ENCODE measurements at regions of chr14 and their contacts with region 1.

Region 1: DNA sequence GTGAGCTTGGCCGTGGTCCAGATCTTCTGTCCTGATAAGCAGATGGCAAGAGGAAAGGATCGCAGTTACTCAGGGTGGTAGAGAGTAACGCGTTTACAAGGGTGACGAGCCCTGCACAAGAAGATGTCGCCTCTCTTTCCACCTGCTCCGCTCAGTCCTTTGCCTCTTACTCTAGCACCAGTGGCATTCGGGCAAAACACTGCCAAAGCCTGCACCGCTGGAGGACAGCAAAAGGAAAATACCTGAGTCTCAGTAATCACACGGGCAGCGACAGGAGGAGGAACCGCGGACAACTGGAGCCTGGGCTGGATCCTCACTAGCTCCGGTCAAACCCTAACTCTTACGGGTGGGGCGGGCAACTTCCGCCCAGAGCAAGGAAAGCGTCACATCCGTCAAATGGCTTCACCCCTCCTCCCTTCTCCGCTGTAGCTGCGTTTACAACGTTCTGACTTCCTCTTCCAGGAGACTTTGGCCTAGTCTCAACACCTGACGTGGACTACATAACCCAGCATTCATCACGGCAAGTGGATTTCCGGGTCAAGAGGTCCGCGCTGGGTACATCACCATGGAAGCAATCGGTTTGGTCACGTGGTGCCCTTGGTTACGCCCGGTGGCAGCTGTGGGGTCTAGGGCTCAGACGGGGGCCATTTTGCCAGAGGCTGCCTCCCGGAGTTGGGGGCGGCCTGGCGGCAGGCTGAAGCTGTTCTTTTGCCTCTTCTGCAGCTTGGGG is at the starts of genes KLHL28 and TOGARAM1:
- DNase-seq: peak; percentile 99
- H3K4me3 ChIP-seq: peak within 1 kb of the TSS; percentile 63
- H3K27ac ChIP-seq: peak within 1 kb of the TSS; percentile 95
- H3K4me1 ChIP-seq: peaks cover 27% of the 10 kb centered on the region
- H3K27me3 ChIP-seq: no peaks in the 10 kb centered on the region
- CTCF ChIP-seq: no peak
- total RNA-seq, gene KLHL28: 10.5 to 18.6 TPM
- total RNA-seq, gene TOGARAM1: 8.8 to 10.7 TPM

Region 2: DNA sequence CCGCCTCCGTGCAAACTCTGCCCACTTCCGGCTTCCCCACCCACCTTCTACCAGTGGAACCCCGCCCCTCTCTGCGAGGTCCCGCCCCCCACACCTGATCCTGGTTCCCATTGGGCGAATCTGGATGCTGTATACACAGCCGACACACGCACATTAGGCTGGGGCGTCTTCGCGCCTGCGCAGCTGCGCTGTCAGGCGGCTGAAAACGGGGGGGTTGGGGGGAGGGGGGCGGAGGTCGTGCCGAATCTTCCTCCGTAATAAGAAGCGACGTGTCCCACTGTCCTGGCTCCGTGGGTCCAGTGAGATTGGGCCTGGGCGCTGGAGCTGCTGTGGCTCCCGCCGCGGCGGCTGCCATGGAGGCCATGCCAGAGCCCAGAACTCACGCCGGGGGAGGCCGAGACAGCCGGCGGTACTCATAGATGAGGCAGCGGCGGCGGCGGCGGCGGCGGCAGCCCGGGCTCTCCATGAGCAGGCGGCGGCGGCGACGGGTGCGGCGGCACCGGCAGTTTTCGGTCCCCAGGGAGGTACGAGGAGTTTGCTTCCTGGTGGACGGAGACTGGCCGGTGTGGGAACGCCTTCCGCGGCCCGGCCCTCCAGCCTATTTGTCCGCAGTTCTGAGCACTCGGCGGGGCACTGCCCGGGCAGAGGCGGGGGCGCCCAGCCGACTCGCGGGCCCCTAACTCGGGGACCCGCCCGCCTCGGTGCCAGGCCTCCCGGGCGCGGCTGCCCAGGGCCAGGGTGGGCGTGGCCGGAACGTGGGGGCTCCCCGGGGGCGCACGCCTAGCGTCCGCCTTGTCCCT is 64.5 kb before region 1 on chr14:
- intact Hi-C with region 1: loop called (anchors 5 kb)
- DNase-seq: peak; percentile 99
- H3K4me3 ChIP-seq: peak overlapping the region; percentile 90
- H3K27ac ChIP-seq: peak overlapping the region; percentile 99
- H3K4me1 ChIP-seq: no peaks in the 10 kb centered on the region
- H3K27me3 ChIP-seq: no peaks in the 10 kb centered on the region
- CTCF ChIP-seq: no peak

Region 3: DNA sequence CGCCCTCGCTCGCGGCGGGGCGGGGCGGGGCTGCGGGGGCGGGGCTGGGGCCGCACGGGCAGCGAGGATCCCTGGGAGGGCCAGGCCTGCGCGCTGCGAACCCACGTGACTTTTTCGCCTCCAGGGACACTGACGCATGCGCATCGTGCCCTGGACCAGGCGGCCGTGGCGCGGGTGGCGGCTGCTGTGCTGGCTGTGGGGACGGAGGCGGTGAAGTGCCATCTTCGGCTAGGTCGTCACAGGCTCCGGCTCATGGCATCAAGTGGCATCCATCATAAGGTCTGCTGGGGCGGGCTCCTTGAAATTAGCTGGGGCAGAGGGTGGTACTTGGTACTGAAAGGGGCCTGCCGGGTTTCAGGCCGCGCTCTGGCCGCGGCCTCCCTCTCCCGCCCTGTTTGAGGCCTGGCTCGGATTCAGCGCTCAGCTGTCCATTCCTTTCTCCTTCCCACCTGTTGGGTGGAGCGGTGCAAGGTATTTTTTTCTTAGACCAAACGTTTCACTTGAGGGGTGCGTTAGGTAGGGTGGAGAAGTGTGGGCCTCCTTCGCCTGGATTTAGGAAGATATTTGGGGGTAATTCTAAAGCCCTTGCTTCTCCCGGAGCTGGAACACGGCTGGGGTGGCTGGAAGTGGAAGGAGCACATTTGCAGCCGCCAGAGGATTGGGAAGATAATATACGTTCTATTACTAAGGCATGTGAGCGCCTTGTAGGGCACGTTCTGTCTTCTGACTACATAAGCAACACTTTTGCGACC is 122.4 kb after region 1 on chr14 and contains the start of gene PRPF39:
- intact Hi-C with region 1: loop called (anchors 5 kb)
- DNase-seq: peak; percentile 96
- H3K4me3 ChIP-seq: peak within 1 kb of the TSS; percentile 61
- H3K27ac ChIP-seq: peak within 1 kb of the TSS; percentile 85
- H3K4me1 ChIP-seq: no peaks in the 10 kb centered on the region
- H3K27me3 ChIP-seq: no peaks in the 10 kb centered on the region
- CTCF ChIP-seq: no peak
- total RNA-seq, gene PRPF39: 22.3 to 33.4 TPM

Region 4: GRCh38 chr14:45134051-45134958 is 172.5 kb after region 1 on chr14 and contains the start of gene FKBP3:
- intact Hi-C with region 1: loop called (anchors 5 kb)
- DNase-seq: peak; percentile 97
- H3K4me3 ChIP-seq: peak within 1 kb of the TSS; percentile 60
- H3K27ac ChIP-seq: peak within 1 kb of the TSS; percentile 80
- H3K4me1 ChIP-seq: peaks cover 10% of the 10 kb centered on the region
- H3K27me3 ChIP-seq: no peaks in the 10 kb centered on the region
- CTCF ChIP-seq: no peak
- total RNA-seq, gene FKBP3: 44.6 to 58.8 TPM

Measured in colonic mucosa (tissue), 4 donors.